CD4-positive, alpha-beta memory T cell (primary cell): ENCODE measurements at regions of chr17 and their contacts with region 1.

Region 1: DNA sequence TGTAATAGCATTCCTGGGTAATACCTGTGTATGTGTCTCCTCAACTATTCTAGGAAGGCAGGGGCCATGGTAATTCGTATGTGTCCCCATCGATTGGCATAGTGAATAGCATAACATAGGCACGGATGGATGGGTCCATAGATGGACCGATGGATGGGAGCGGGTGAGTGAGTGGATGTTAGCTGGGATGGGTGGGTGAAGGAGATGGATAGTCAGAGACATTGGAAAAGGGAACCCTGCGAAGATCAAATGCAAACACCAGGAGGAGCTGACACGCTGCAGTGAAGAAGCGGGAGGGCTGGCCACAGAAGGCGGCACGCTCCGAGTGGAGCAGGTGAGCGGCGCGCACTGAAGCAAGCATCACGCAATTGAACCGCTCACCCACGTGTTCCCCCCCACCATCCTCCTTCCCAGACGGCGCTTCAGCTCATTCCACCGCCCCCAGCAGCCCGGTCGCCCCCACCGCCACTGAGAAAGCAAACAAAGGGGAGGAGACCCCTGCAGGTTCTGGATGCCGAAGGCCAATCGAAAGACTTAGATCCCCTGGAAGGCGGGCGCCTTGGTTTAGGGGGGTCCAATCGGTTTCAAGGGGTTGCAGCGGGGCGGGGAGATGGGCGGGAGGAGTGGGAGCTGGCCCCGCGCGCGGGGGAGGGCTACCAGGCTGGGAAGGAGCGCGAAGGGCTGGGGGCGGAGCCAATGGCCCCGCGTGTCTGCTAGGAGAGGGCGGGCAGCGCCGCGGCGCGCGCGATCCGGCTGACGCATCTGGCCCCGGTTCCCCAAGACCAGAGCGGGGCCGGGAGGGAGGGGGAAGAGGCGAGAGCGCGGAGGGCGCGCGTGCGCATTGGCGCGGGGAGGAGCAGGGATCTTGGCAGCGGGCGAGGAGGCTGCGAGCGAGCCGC is at the start of gene ARRB2:
- DNase-seq: peak; percentile 98 to 99 (median 99)
- H3K4me3 ChIP-seq: peak within 1 kb of the TSS; percentile 85 to 89
- H3K4me3 Mint-ChIP-seq: peak within 1 kb of the TSS; percentile 85 to 98 (median 96)
- H3K27ac ChIP-seq: peak within 1 kb of the TSS; percentile 79
- H3K27ac Mint-ChIP-seq: peak within 1 kb of the TSS; percentile 86 to 98 (median 91)
- H3K4me1 ChIP-seq: peaks cover 40% of the 10 kb centered on the region
- H3K4me1 Mint-ChIP-seq: peaks cover 34 to 72% (median 45%) of the 10 kb centered on the region in 4 donors
- H3K27me3 ChIP-seq: no peaks in the 10 kb centered on the region
- H3K27me3 Mint-ChIP-seq: no peaks in the 10 kb centered on the region
- total RNA-seq, gene ARRB2: 340 to 341 TPM

Region 2: DNA sequence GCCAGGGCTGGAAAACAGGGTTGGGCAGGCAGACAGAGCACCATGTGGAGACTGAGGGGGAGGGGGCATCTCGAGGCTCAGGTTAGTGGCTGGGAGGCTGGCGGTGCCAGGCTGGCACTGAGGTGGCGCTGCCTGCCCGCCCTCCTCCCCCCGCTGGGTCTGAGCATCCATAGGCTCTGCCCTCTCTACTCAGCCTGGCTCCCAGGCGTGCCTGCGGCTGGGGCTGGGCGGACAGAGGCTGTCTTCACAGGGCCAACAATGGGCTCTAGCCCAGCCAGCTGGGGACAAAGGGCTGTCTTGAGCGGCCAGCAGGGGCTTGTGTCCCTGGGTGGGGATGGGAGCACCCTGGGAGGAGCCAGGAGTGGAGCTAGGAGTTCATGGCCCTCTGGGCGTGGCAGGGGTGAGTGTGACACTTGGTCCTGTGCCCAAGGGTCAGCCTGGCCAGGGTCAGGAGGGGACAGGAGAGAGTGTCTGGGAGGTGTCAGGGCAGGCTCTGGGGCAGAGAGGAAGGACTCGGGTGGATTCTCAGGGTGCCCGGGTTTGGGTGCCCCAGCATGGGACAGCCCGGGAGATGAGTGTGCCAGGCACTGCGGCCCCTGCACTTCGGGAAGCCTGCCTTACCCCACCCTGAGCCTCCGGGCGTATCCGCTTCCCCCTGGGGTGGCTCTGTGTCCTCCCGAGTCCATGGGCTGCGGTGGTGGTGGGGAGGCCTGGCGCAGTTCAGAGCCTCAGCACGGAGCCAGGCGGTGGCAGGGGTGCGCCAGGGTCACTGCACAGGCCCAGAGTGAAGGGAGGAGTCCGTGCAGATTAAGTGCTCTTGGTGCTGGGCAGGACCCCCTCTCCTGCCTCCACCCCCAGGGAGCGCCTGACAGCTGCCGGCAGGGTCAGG is 175.8 kb before region 1 on chr17:
- CTCF ChIA-PET with region 1: no interaction called
- POLR2A ChIA-PET with region 1: no interaction called
- intact Hi-C with region 1: no loop called
- DNase-seq: peak in 1 of 5 donors; percentile 11
- H3K4me3 ChIP-seq: no peak overlapping the region
- H3K4me3 Mint-ChIP-seq: no peak overlapping the region
- H3K27ac ChIP-seq: no peak overlapping the region
- H3K27ac Mint-ChIP-seq: no peak overlapping the region
- H3K4me1 ChIP-seq: no peaks in the 10 kb centered on the region
- H3K4me1 Mint-ChIP-seq: peaks cover 0 to 5% (median 3%) of the 10 kb centered on the region in 4 donors
- H3K27me3 ChIP-seq: no peaks in the 10 kb centered on the region
- H3K27me3 Mint-ChIP-seq: peaks cover 0 to 6% of the 10 kb centered on the region in 2 donors

Region 3: DNA sequence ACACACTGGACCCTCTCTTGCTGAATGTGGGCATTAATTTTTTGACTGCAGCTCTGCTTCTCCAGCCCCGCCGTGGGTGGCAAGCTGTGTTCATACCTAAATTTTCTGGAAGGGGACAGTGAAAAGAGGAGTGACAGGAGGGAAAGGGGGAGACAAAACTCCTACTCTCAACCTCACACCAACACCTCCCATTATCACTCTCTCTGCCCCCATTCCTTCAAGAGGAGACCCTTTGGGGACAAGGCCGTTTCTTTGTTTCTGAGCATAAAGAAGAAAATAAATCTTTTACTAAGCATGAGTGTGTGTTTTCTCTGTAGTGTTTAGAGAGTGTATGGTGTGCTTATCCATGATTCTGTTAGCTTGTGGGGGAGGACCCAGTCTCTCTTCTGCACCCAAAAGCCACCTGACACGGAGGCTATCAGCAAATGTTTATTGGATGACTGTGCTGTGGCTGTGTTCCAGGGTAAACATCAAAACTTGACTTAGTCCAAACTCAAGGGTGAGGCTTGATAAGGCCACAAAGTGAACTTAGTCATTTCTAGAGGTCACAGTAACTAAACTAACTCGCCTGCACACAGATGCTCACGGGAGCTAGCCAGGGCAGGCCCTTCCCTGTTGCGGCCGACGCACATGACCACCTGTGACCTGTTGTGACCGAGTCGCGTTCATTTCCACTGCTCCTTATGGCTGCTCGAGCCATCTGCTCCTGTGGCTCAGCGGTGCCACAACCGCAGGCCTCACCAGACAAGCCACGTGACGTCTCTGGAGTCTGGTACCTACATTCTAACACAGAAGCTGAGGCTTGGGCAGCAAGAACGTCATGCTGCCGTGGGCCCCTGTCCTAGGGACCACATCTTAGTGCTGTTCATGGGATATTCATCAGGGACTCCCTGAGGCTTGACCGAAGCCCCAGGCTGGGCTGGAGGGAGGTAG is 11.4 kb after region 1 on chr17:
- CTCF ChIA-PET with region 1: no interaction called
- POLR2A ChIA-PET with region 1: interaction called, 27 read pairs
- intact Hi-C with region 1: no loop called
- DNase-seq: no peak
- H3K4me3 ChIP-seq: no peak overlapping the region
- H3K4me3 Mint-ChIP-seq: peak overlapping the region in 1 of 8 donors; percentile 20
- H3K27ac ChIP-seq: no peak overlapping the region
- H3K27ac Mint-ChIP-seq: peak overlapping the region in 6 of 7 donors; percentile 16 to 70 (median 62)
- H3K4me1 ChIP-seq: peaks cover 6% of the 10 kb centered on the region
- H3K4me1 Mint-ChIP-seq: peaks cover 3 to 15% (median 6%) of the 10 kb centered on the region in 4 donors
- H3K27me3 ChIP-seq: no peaks in the 10 kb centered on the region
- H3K27me3 Mint-ChIP-seq: no peaks in the 10 kb centered on the region

Region 4: GRCh38 chr17:4739122-4740024 is 29.3 kb after region 1 on chr17 and contains the starts of genes CXCL16 and ZMYND15:
- CTCF ChIA-PET with region 1: interaction called, 4 read pairs
- POLR2A ChIA-PET with region 1: interaction called, 5 read pairs
- intact Hi-C with region 1: loop called (anchors 2 kb)
- DNase-seq: peak; percentile 63 to 81 (median 67)
- H3K4me3 ChIP-seq: peak within 1 kb of the TSS; percentile 23 to 67
- H3K4me3 Mint-ChIP-seq: peak within 1 kb of the TSS; percentile 90 to 95 (median 92)
- H3K27ac ChIP-seq: peak within 1 kb of the TSS; percentile 25
- H3K27ac Mint-ChIP-seq: peak within 1 kb of the TSS; percentile 77 to 97 (median 93)
- H3K4me1 ChIP-seq: peaks cover 19% of the 10 kb centered on the region
- H3K4me1 Mint-ChIP-seq: peaks cover 10 to 22% (median 14%) of the 10 kb centered on the region in 4 donors
- H3K27me3 ChIP-seq: no peaks in the 10 kb centered on the region
- H3K27me3 Mint-ChIP-seq: peaks cover 1 to 6% of the 10 kb centered on the region in 2 donors
- total RNA-seq, gene CXCL16: 3.2 to 3.4 TPM
- total RNA-seq, gene ZMYND15: 0.41 to 0.44 TPM

Region 5: DNA sequence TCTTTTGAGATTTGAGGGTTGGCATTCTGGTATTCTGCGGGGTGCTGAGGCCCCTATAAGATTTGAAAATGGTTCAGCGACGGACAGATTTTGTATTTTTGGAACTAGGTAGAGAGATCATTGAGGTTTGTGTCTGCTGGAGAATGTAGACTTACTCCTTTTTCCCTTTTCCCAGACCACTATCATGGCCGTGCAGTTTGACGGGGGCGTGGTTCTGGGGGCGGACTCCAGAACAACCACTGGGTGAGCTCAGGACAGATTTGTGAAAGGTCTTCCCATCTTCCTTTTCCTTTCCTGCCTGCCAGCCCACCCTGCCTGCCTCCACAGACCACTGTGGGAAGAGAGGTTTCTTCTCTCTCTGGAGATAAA is 86.5 kb after region 1 on chr17:
- CTCF ChIA-PET with region 1: no interaction called
- POLR2A ChIA-PET with region 1: interaction called, 16 read pairs
- intact Hi-C with region 1: no loop called
- DNase-seq: no peak
- H3K4me3 ChIP-seq: peak overlapping the region; percentile 62 to 90
- H3K4me3 Mint-ChIP-seq: peak overlapping the region; percentile 99 to 100 (median 100)
- H3K27ac ChIP-seq: peak overlapping the region; percentile 83
- H3K27ac Mint-ChIP-seq: peak overlapping the region; percentile 90 to 99 (median 98)
- H3K4me1 ChIP-seq: peaks cover 10% of the 10 kb centered on the region
- H3K4me1 Mint-ChIP-seq: peaks cover 11 to 16% (median 11%) of the 10 kb centered on the region in 4 donors
- H3K27me3 ChIP-seq: no peaks in the 10 kb centered on the region
- H3K27me3 Mint-ChIP-seq: no peaks in the 10 kb centered on the region

Region 6: GRCh38 chr17:4881761-4882555 is 171.9 kb after region 1 on chr17:
- CTCF ChIA-PET with region 1: interaction called, 50 read pairs
- POLR2A ChIA-PET with region 1: interaction called, 11 read pairs
- intact Hi-C with region 1: loop called (anchors 1 kb)
- DNase-seq: peak in 4 of 5 donors; percentile 64 to 69 (median 65)
- H3K4me3 ChIP-seq: no peak overlapping the region
- H3K4me3 Mint-ChIP-seq: no peak overlapping the region
- H3K27ac ChIP-seq: no peak overlapping the region
- H3K27ac Mint-ChIP-seq: peak overlapping the region in 2 of 7 donors; percentile 29 to 37
- H3K4me1 ChIP-seq: no peaks in the 10 kb centered on the region
- H3K4me1 Mint-ChIP-seq: peaks cover 0 to 3% (median 0%) of the 10 kb centered on the region in 4 donors
- H3K27me3 ChIP-seq: no peaks in the 10 kb centered on the region
- H3K27me3 Mint-ChIP-seq: no peaks in the 10 kb centered on the region

Region 7: GRCh38 chr17:4903051-4903818 is 193.2 kb after region 1 on chr17 and contains the start of gene CHRNE:
- CTCF ChIA-PET with region 1: interaction called, 23 read pairs
- POLR2A ChIA-PET with region 1: interaction called, 8 read pairs
- intact Hi-C with region 1: loop called (anchors 1 kb)
- DNase-seq: peak; percentile 75 to 87 (median 79)
- H3K4me3 ChIP-seq: no peak within 1 kb of the TSS
- H3K4me3 Mint-ChIP-seq: peak within 1 kb of the TSS; percentile 24 to 80 (median 69)
- H3K27ac ChIP-seq: no peak within 1 kb of the TSS
- H3K27ac Mint-ChIP-seq: peak within 1 kb of the TSS; percentile 83 to 94 (median 90)
- H3K4me1 ChIP-seq: peaks cover 41% of the 10 kb centered on the region
- H3K4me1 Mint-ChIP-seq: peaks cover 19 to 45% (median 37%) of the 10 kb centered on the region in 4 donors
- H3K27me3 ChIP-seq: no peaks in the 10 kb centered on the region
- H3K27me3 Mint-ChIP-seq: peaks cover 0 to 2% of the 10 kb centered on the region in 2 donors
- total RNA-seq, gene CHRNE: 0.64 to 1.3 TPM

Region 8: DNA sequence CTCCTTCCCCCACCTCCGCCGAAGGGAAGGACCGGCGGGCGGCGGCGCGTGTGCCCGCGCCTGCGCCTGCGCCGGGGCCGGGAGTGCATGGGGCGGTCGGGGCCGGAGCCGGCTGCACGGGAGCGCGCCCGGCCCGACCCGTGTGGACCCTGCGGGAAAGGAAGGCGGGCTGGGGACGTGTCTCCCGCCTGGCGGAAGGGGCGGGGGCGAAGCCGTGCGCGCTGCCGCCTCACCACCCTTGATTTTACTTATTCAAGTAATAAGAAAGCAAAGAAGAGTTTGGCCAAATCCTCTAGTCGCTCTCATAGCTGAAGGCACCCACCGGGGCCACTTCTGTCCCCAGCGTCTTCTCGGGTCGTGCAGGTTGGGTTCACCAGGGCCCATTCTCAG is 238.9 kb after region 1 on chr17:
- CTCF ChIA-PET with region 1: no interaction called
- POLR2A ChIA-PET with region 1: interaction called, 7 read pairs
- intact Hi-C with region 1: loop called (anchors 2 kb)
- DNase-seq: peak in 4 of 5 donors; percentile 78 to 82 (median 80)
- H3K4me3 ChIP-seq: peak overlapping the region; percentile 61 to 94
- H3K4me3 Mint-ChIP-seq: peak overlapping the region; percentile 95 to 100 (median 99)
- H3K27ac ChIP-seq: peak overlapping the region; percentile 94
- H3K27ac Mint-ChIP-seq: peak overlapping the region; percentile 92 to 100 (median 98)
- H3K4me1 ChIP-seq: peaks cover 43% of the 10 kb centered on the region
- H3K4me1 Mint-ChIP-seq: peaks cover 24 to 63% (median 39%) of the 10 kb centered on the region in 4 donors
- H3K27me3 ChIP-seq: no peaks in the 10 kb centered on the region
- H3K27me3 Mint-ChIP-seq: no peaks in the 10 kb centered on the region